AG04450 (cell line): ENCODE measurements at regions of chr12 and their contacts with region 1.

Region 1: GRCh38 chr12:45279931-45280830 is 64.3 kb downstream of the ANO6 start:
- DNase-seq: no peak
- H3K4me3 ChIP-seq: no peak overlapping the region
- H3K27ac ChIP-seq: no peak overlapping the region
- H3K27me3 ChIP-seq: no peaks in the 10 kb centered on the region
- CTCF ChIP-seq: no peak

Region 2: GRCh38 chr12:45268672-45269411 is 11.3 kb before region 1 on chr12:
- CTCF ChIA-PET with region 1: interaction called, 11 read pairs
- POLR2A ChIA-PET with region 1: no interaction called
- DNase-seq: peak; percentile 61
- H3K4me3 ChIP-seq: peak overlapping the region; percentile 15; the same call in 1 of the 2 replicates
- H3K27ac ChIP-seq: peak overlapping the region; percentile 55
- H3K27me3 ChIP-seq: no peaks in the 10 kb centered on the region
- CTCF ChIP-seq: peak; percentile 58

Region 3: GRCh38 chr12:45483571-45483970 is 203.4 kb after region 1 on chr12:
- CTCF ChIA-PET with region 1: no interaction called
- POLR2A ChIA-PET with region 1: no interaction called
- DNase-seq: no peak
- H3K4me3 ChIP-seq: no peak overlapping the region
- H3K27ac ChIP-seq: no peak overlapping the region
- H3K27me3 ChIP-seq: no peaks in the 10 kb centered on the region
- CTCF ChIP-seq: no peak